ENCODE measurements at regions of chr22 and their contacts with region 1.

Region 1: DNA sequence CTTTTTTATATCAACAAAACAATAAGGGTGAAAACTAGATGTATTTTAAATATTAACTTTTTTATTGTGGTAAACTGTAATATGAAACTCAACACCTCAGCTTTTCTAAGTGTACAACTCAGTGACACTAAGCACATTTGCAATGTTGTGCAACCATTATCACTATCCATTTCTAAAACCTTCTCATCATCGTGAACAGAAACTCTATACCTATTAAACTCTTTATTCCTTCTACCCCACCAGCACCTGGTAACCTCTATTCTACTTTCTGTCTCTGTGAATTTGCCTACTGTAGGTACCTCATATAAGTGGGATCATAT is 9.4 kb downstream of the HORMAD2 start:
- H3K4me3 ChIP-seq: no peak overlapping the region
- H3K27ac ChIP-seq: no peak overlapping the region
- H3K4me1 ChIP-seq: no peaks in the 10 kb centered on the region
- CTCF ChIP-seq: no peak

Region 2: GRCh38 chr22:29587938-29588699 is 501.5 kb before region 1 on chr22:
- CTCF ChIA-PET with region 1: interaction called, 20 read pairs
- POLR2A ChIA-PET with region 1: no interaction called
- H3K4me3 ChIP-seq: no peak overlapping the region
- H3K27ac ChIP-seq: no peak overlapping the region
- H3K4me1 ChIP-seq: no peaks in the 10 kb centered on the region
- CTCF ChIP-seq: no peak

Region 3: DNA sequence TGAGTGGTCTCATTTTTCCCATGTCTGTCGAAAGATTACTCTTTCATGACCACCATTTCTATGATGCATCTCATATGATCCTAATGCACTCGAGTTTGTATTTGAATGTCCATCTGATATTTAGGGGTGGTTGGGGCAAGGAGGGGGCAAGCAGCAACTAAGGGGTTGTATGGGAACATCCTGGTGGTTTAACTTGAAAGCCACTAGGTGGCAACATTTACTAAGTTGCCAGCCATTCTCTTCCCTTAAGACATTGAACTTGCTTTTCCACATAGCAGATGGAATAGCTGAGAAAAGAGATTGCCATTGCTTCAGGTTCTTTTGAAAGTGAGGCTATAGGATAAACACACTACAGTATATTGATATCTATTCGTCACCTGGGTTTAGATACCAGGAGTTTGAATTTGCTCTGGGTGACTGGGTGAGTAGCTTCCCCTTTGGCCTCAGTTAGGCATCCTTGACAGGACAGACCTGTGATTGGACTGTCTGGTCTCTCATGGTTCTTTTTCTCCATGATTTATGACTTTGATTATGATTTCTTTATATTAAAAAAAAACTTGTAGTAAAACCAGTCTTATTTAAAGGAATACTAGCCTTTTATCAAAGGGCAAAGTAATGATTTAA is 453.8 kb before region 1 on chr22:
- CTCF ChIA-PET with region 1: interaction called, 77 read pairs
- POLR2A ChIA-PET with region 1: no interaction called
- H3K4me3 ChIP-seq: no peak overlapping the region
- H3K27ac ChIP-seq: no peak overlapping the region
- H3K4me1 ChIP-seq: no peaks in the 10 kb centered on the region; the same call in 1 of the 2 replicates
- CTCF ChIP-seq: peak; percentile 70; the same call in 1 of the 2 replicates

Region 4: GRCh38 chr22:29689880-29690213 is 399.8 kb before region 1 on chr22:
- CTCF ChIA-PET with region 1: interaction called, 30 read pairs
- POLR2A ChIA-PET with region 1: no interaction called
- H3K4me3 ChIP-seq: no peak overlapping the region
- H3K27ac ChIP-seq: no peak overlapping the region
- H3K4me1 ChIP-seq: peaks cover 4% of the 10 kb centered on the region; the same call in 1 of the 2 replicates
- CTCF ChIP-seq: peak; percentile 89

Region 5: GRCh38 chr22:29772170-29772641 is 317.4 kb before region 1 on chr22:
- CTCF ChIA-PET with region 1: interaction called, 10 read pairs
- POLR2A ChIA-PET with region 1: no interaction called
- H3K4me3 ChIP-seq: no peak overlapping the region
- H3K27ac ChIP-seq: no peak overlapping the region
- H3K4me1 ChIP-seq: no peaks in the 10 kb centered on the region
- CTCF ChIP-seq: 0 out of 2 replicates have a peak, but pooled peaks have one; percentile 39

Region 6: GRCh38 chr22:30226192-30226832 is 136.7 kb after region 1 on chr22:
- CTCF ChIA-PET with region 1: no interaction called
- POLR2A ChIA-PET with region 1: no interaction called
- H3K4me3 ChIP-seq: no peak overlapping the region
- H3K27ac ChIP-seq: no peak overlapping the region
- H3K4me1 ChIP-seq: peaks cover 12% of the 10 kb centered on the region
- CTCF ChIP-seq: no peak